Transverse colon (tissue), 4 donors: ENCODE measurements at regions of chr4 and their contacts with region 1.

Region 1: DNA sequence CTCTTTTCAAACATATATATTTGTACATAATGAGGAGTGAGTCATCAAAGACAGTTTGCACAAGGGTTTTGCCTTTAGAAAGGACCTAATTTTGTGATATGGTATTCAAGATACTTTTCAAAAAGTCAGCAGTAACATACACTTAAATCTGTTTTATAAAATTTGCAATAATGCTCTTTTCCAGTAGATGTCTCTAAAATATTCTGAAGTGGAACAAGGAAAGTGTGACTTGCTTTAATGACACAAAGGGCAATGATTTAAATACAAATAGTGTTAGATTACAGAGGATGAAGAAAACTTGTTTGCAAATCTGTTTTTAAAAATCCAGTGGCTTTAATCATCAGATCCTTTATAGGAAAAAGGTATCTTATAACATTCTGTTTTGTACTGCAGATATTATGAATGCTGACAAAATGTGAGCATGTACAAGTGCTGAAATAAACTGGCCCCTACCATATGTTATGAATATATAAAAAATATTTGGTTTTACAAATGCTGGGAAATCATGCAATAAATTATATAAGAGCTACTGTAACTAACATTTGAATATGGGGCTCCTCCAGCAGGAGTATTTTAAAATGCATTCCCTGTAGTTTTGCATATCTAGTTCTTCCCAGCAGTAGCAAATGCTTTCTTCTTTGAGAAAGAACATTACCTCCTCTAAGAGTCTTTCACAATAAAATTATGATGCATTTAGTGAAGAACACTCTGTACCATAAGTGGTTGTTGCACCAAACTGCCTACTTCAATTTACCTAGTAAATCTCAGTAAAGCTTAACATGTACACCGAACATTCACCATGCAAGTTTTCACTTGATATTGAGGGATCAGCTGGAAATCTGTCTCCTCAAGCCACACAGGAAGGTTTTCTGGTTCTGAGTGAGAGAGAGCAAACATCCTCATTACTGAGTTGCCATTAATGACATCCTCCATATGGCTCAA is 20.2 kb downstream of the MMRN1 start:
- DNase-seq: no peak
- H3K4me3 ChIP-seq: no peak overlapping the region
- H3K27ac ChIP-seq: no peak overlapping the region
- H3K4me1 ChIP-seq: no peaks in the 10 kb centered on the region
- H3K27me3 ChIP-seq: no peaks in the 10 kb centered on the region
- CTCF ChIP-seq: no peak
- EP300 ChIP-seq: no peak
- POLR2A ChIP-seq: no peak

Region 2: DNA sequence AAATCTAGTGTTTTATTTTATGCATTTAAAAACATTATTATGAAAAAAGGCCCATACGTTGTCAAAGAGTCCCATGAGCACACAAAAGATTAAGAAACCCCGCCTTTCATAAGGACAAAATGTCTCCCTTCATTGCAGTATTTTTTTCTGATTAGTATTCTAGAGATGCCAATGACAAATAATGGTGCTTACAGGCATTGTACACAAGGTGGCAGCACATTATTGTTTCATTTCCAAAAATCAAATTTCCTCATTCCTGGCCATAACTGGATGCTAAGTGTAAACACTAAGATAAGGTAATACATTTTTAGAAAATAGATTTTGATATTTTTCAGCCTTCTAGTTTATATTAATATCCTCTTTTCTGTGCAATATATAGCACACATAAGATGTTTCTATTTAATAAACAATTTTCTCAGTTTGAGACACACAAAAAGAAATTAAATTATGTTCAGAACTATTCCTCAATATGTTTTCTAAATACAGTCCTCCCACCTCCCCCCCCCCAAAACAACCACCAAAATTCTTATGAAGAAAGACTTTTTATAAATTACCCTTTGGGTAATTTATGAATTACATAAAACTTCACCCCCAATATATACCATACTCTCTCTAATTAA is 755.9 kb before region 1 on chr4:
- in situ Hi-C with region 1: loop called in 1 of 4 experiments (anchors 25 kb)
- intact Hi-C with region 1: no loop called
- DNase-seq: no peak
- H3K4me3 ChIP-seq: no peak overlapping the region
- H3K27ac ChIP-seq: no peak overlapping the region
- H3K4me1 ChIP-seq: no peaks in the 10 kb centered on the region
- H3K27me3 ChIP-seq: no peaks in the 10 kb centered on the region
- CTCF ChIP-seq: peak; percentile 72 to 80 (median 74)
- EP300 ChIP-seq: no peak
- POLR2A ChIP-seq: no peak

Region 3: GRCh38 chr4:89226665-89227574 is 688.0 kb before region 1 on chr4:
- in situ Hi-C with region 1: loop called in 3 of 4 experiments (anchors 25 kb)
- intact Hi-C with region 1: no loop called
- DNase-seq: peak; percentile 89
- H3K4me3 ChIP-seq: no peak overlapping the region
- H3K27ac ChIP-seq: peak overlapping the region; percentile 5 to 40 (median 28)
- H3K4me1 ChIP-seq: peaks cover 0 to 10% (median 4%) of the 10 kb centered on the region in 4 donors
- H3K27me3 ChIP-seq: no peaks in the 10 kb centered on the region
- CTCF ChIP-seq: peak; percentile 73 to 92 (median 74)
- EP300 ChIP-seq: no peak
- POLR2A ChIP-seq: no peak

Region 4: GRCh38 chr4:89434364-89434988 is 480.4 kb before region 1 on chr4:
- in situ Hi-C with region 1: loop called in 1 of 4 experiments (anchors 25 kb)
- intact Hi-C with region 1: no loop called
- DNase-seq: no peak
- H3K4me3 ChIP-seq: no peak overlapping the region
- H3K27ac ChIP-seq: no peak overlapping the region
- H3K4me1 ChIP-seq: no peaks in the 10 kb centered on the region
- H3K27me3 ChIP-seq: no peaks in the 10 kb centered on the region
- CTCF ChIP-seq: peak; percentile 69 to 81 (median 77)
- EP300 ChIP-seq: no peak
- POLR2A ChIP-seq: no peak

Region 5: DNA sequence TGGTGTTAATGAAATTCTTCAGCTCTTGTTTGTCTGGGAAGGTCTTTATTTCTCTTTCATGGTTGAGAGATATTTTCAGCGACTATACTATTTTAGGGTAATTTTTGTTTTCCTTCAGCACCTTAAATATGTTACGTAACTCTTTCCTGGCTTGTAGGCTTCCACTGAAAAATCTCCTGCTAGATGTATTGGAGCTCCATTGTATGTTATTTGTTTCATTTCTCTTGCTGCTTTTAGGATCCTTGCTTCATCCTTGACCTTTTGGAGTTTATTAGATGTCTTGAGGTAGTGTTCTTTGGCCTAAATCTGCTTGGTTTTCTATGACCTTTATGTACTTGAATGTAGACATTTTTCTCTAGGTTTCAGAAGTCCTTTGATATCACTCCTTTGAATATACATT is 73.4 kb after region 1 on chr4:
- in situ Hi-C with region 1: no loop called
- intact Hi-C with region 1: no loop called
- DNase-seq: no peak
- H3K4me3 ChIP-seq: no peak overlapping the region
- H3K27ac ChIP-seq: no peak overlapping the region
- H3K4me1 ChIP-seq: no peaks in the 10 kb centered on the region
- H3K27me3 ChIP-seq: no peaks in the 10 kb centered on the region
- CTCF ChIP-seq: no peak
- EP300 ChIP-seq: no peak
- POLR2A ChIP-seq: no peak